Activated CD4-positive, alpha-beta memory T cell treated with anti-CD3 and anti-CD28 coated beads for 36 hours (primary cell): ENCODE measurements at regions of chrX and their contacts with region 1.

Region 1: DNA sequence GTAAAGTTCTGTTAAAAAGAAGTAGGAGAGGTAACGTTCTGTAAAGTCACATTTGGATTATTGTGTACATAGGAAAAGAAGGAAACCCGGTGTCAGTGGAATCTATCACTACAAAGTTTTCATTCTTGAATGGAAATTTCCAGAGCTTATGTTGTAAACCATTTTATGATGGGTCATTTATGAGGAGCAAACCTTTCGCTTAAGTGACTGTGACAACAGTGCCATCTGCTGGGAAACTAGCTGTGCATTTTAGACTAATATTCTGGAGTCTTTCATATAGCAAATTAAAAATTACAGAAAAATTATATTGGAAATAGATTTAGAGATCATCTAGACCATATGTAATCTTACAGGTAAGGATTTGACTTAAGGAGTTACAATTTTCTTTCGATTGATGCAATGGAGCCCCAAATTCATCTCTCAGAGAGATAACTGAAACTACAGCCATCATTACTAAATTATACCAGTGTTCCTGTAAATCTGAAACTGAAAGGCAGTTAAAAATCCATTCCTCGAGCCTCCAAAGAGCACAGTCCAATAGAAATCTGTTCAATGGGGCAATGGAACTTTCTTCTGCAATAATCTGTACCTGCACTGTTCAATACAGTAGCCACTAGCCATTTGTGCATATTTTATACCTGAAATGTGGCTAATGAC is 26.9 kb downstream of the ASB9 start:
- DNase-seq: peak; percentile 36
- H3K4me3 Mint-ChIP-seq: no peak overlapping the region
- H3K27ac Mint-ChIP-seq: no peak overlapping the region
- H3K4me1 Mint-ChIP-seq: peaks cover 8% of the 10 kb centered on the region
- H3K27me3 Mint-ChIP-seq: no peaks in the 10 kb centered on the region

Region 2: GRCh38 chrX:14039344-14039743 is 1203.7 kb before region 1 on chrX:
- CTCF ChIA-PET with region 1: no interaction called
- POLR2A ChIA-PET with region 1: no interaction called
- intact Hi-C with region 1: loop called (anchors 1 kb)
- DNase-seq: peak; percentile 58
- H3K4me3 Mint-ChIP-seq: no peak overlapping the region
- H3K27ac Mint-ChIP-seq: no peak overlapping the region
- H3K4me1 Mint-ChIP-seq: no peaks in the 10 kb centered on the region
- H3K27me3 Mint-ChIP-seq: no peaks in the 10 kb centered on the region

Region 3: DNA sequence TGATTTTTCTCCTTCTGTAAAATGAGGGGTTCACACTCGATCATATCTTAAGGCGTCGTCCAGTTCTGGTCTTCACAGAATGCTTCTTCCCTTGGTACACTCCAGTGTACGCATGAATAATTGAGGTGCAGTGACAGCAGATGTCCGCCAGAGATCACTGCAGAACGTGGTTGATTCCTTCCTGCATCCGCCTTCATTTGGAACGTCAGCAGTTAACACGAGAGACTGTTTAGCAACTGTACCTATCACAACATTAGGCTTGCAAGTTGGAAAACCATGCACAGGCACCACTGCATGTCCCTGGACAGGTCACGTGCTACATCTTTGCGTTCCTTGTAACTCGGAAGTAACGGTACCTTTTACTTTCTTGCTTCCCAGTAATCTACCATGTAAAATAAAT is 1147.3 kb before region 1 on chrX:
- CTCF ChIA-PET with region 1: no interaction called
- POLR2A ChIA-PET with region 1: no interaction called
- intact Hi-C with region 1: loop called (anchors 2 kb)
- DNase-seq: peak; percentile 50
- H3K4me3 Mint-ChIP-seq: no peak overlapping the region
- H3K27ac Mint-ChIP-seq: no peak overlapping the region
- H3K4me1 Mint-ChIP-seq: no peaks in the 10 kb centered on the region
- H3K27me3 Mint-ChIP-seq: no peaks in the 10 kb centered on the region

Region 4: DNA sequence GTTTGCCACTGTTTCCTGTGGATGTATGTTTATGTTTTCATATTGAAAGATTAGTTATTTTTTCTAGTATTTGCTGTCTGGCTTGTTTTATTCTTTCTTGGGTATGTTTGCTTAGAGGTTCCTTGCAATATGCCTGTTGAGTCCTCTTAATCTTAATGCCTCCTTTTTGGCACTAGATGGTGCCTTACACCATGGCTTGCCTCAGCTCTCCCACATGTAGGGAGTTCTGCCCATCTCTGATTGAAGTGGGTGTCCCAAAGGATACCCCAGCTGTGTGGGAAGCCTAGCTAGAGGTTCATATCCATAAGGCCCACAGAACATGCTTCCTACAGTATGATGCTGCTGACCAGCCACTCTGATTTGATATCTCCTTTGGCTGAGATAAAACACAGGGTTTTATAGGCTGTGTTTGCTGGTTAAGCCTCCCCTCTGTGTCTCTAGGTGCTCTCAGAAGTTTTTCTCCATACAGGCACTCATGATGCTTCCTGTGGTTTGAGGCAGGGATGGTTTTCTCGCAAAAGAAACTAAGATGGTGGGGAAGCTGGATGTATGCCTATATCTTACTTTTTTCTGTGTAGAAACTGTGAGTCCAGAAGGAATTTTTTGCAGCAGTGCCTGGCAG is 135.5 kb before region 1 on chrX:
- CTCF ChIA-PET with region 1: interaction called, 13 read pairs
- POLR2A ChIA-PET with region 1: no interaction called
- intact Hi-C with region 1: loop called (anchors 1 kb)
- DNase-seq: peak; percentile 9
- H3K4me3 Mint-ChIP-seq: no peak overlapping the region
- H3K27ac Mint-ChIP-seq: no peak overlapping the region
- H3K4me1 Mint-ChIP-seq: peaks cover 12% of the 10 kb centered on the region
- H3K27me3 Mint-ChIP-seq: peaks cover 3% of the 10 kb centered on the region

Region 5: GRCh38 chrX:15143050-15143824 is 99.8 kb before region 1 on chrX:
- CTCF ChIA-PET with region 1: interaction called, 3 read pairs
- POLR2A ChIA-PET with region 1: no interaction called
- intact Hi-C with region 1: loop called (anchors 2 kb)
- DNase-seq: peak; percentile 59
- H3K4me3 Mint-ChIP-seq: no peak overlapping the region
- H3K27ac Mint-ChIP-seq: no peak overlapping the region
- H3K4me1 Mint-ChIP-seq: peaks cover 15% of the 10 kb centered on the region
- H3K27me3 Mint-ChIP-seq: no peaks in the 10 kb centered on the region

Region 6: DNA sequence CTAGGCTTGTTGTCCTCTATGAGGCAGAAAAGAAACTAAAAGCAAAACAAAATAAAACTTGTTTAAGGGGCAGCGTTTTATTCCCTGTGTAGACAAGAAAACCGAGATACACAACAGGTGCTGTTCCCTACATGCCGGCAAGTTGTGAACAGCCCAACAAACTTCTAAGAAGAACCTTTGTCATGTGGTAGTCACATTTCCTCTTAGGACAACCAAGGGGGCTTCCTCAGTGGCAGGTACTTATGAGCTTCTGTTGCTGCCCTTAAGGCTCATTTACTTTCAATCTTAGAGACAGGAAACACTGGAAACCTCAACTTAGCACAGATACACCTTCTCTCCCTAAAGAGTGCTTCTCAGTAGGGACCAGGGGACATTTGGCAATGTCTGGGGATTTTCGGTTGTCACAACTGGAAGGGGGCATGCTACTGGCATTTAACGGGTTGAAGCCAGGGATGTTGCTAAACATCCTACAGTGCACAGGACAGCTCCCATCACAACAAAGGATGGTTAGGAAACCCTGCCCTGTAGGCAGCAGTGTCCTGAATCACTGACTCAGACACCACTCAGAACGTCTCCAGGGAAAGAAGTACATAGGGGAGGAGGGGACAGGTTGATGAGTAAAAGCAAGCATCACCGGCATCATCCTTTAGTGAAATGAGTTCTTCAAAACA is 84.2 kb before region 1 on chrX:
- CTCF ChIA-PET with region 1: no interaction called
- POLR2A ChIA-PET with region 1: no interaction called
- intact Hi-C with region 1: loop called (anchors 5 kb)
- DNase-seq: peak; percentile 51
- H3K4me3 Mint-ChIP-seq: peak overlapping the region; percentile 57
- H3K27ac Mint-ChIP-seq: peak overlapping the region; percentile 70
- H3K4me1 Mint-ChIP-seq: peaks cover 34% of the 10 kb centered on the region
- H3K27me3 Mint-ChIP-seq: peaks cover 2% of the 10 kb centered on the region